RWPE1 (cell line): ENCODE measurements at regions of chr6 and their contacts with region 1.

Region 1: GRCh38 chr6:165439928-165440554 is 130.6 kb upstream of the C6orf118 start:
- DNase-seq: peak; percentile 18
- H3K27ac ChIP-seq: no peak overlapping the region
- CTCF ChIP-seq: peak; percentile 70

Region 2: DNA sequence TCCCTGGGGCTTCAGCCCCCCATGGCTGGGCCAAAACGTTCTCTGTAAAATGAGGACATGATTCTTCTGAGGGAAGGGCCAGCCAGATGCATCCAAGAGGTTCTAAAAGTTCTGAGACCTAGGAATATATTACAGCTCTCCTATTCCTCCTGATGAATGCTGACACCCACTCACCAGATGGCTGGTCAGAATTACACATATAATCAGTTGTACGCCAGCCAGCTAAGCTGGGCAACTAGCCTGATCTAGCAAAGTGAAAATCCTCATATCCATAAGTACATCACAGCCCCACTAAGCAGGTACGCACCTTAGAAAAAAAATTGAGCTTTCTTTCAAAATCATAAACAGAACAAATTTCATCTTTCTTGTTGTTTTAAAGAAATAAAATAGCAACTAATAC is 165.4 kb before region 1 on chr6:
- CTCF ChIA-PET with region 1: no interaction called
- POLR2A ChIA-PET with region 1: no interaction called
- DNase-seq: no peak
- H3K27ac ChIP-seq: no peak overlapping the region
- CTCF ChIP-seq: no peak

Region 3: GRCh38 chr6:165850434-165851019 is 410.5 kb after region 1 on chr6:
- CTCF ChIA-PET with region 1: interaction called, 38 read pairs
- POLR2A ChIA-PET with region 1: no interaction called
- DNase-seq: peak; percentile 51
- H3K27ac ChIP-seq: no peak overlapping the region
- CTCF ChIP-seq: peak; percentile 94